Left cardiac atrium (tissue), 4 donors: ENCODE measurements at regions of chr15 and their contacts with region 1.

Region 1: DNA sequence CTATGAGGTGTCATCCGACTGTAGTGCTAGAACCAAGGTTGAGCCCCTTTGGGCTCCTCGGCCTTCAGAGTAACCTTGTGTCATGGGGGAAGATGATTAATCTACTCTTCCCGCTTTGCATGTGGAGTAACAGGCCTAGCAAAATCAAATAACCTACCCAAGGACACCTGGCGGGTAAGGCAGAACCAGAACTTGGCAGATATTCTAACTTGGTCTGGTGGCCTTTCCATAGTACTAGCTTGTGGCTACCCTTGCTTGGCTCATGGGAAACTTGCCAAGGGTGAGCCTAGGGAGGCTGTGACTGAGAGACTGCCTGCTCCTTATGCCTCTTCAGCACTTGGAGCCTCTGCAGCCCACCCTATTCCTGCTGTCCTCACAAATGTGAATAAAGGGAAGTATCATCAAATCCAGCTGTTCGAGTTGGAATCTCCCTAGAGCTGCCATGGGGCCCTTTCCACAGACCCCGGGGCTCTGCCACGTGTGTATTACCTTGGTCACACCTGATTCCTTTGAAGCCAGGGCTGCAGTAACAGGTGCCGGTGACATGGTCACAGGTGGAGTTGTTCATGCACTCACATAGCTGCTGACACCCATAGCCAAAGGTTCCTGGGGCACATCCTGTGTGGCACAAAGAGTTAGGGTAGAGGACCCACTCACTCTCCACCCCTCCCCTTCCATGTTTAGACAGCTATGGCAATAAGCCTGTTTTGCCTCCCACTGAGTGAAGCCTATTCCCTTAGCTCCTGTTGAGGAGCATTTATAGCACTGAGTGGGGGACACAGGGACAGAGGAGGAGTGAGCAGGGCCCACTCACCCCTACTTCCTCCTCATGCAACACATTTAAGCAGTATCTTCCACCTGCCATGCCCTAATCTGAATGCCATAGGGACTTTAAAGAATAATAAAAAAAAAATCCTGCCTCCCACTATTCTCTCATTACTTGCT is 46.0 kb downstream of the RAB11A start:
- DNase-seq: no peak
- ATAC-seq: no peak

Region 2: GRCh38 chr15:66004618-66005262 is 89.5 kb after region 1 on chr15:
- intact Hi-C with region 1: no loop called
- DNase-seq: no peak
- ATAC-seq: no peak

Region 3: DNA sequence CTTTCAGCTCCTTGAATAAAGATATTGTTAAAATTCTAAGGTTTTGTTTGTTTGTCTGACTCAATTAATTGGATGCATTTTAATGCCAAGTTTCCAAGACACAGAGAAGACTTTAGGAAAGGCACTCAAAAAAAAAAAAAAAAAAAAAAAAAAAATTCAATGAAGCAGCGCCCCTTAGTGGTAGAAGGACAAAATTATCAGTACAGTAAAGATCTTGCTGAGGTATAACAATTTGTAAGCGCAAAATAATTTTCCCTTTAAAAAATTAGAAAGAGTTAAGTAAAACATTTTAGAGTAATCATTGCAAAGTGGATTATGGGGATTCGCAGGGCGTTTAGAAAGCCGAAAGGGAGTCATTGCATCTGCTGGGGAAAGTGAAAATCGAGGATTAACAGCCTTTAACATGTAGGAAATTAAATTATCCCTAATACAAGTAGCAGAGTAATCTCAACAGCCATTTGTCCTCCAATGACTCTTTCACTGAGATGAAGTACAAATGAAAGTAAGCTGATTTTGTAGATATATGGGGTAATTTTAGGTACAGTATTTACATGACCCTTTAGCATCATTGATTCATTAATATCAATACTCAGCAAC is 372.3 kb after region 1 on chr15:
- intact Hi-C with region 1: loop called in 1 of 2 experiments (anchors 5 kb)
- DNase-seq: no peak
- ATAC-seq: no peak